Endothelial cell of umbilical vein (primary cell): ENCODE measurements at regions of chr10 and their contacts with region 1.

Region 1: DNA sequence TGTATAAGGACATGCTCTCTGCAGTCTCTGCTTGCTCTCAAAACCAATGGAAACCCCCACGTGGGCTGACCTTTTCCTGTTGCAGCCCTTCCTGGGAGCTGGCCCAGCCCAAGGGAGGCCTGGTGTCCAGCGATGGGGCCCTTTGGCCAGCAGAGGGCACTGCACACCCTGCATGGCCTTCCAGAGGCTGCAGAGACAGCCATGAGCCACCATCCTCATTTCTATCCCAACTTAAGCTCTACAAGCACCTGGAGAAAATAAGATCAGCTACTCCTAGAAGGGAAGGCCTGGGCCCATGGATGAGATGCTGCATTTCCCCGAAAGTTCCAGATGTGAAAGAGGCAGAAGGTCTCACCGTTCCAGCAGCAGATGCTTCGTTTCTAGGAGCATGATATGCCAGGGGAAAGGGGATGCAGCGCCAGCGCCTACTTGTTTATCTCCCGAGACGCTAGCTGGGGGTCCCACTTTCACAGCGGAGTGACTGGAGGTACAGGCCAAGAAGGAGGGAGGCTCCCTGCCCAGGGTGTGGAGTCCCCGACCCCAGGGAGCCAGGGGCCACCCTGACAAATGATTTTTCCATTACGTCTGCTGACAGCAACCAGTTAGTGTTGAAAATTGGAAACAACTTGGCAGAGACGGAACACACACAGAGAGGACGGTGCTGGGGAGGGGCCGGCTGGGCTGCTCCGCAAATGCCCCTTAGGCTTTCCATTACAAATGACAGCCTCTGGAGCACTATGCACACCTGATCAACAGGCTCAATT is 106.4 kb downstream of the ZRANB1 start:
- DNase-seq: peak; percentile 84
- H3K4me3 ChIP-seq: no peak overlapping the region
- H3K27ac ChIP-seq: peak overlapping the region; percentile 8
- H3K4me1 ChIP-seq: peaks cover 26% of the 10 kb centered on the region
- H3K27me3 ChIP-seq: no peaks in the 10 kb centered on the region
- CTCF ChIP-seq: peak; percentile 94 to 97
- POLR2A ChIP-seq: no peak

Region 2: GRCh38 chr10:125037145-125037877 is 11.0 kb before region 1 on chr10:
- CTCF ChIA-PET with region 1: interaction called, 28 read pairs
- POLR2A ChIA-PET with region 1: no interaction called
- dilution Hi-C with region 1: no loop called
- intact Hi-C with region 1: loop called (anchors 1 kb)
- DNase-seq: no peak
- H3K4me3 ChIP-seq: no peak overlapping the region
- H3K27ac ChIP-seq: no peak overlapping the region
- H3K4me1 ChIP-seq: peaks cover 12% of the 10 kb centered on the region
- H3K27me3 ChIP-seq: no peaks in the 10 kb centered on the region
- CTCF ChIP-seq: no peak
- POLR2A ChIP-seq: no peak

Region 3: DNA sequence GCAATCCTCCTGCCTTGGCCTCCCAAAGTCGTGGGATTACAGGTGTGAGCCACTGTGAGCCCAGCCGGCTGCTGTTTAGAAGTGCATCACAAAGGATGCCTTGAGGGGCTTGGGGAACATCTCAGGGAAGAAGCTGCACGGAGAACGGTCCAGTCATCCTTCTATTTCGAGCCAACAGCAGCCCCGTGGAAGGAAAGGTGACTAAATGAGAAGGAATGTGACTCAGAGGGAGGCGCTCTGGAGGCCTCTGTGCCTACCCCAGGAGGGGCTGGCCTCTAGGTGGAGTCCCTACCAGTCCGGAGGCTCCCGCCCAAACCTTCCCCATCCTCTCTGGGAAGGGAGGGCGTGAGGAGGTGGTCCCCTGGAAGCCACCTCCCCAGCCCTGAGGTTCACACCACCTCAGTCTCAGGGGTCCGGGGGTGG is 35.9 kb after region 1 on chr10:
- CTCF ChIA-PET with region 1: interaction called, 21 read pairs
- POLR2A ChIA-PET with region 1: no interaction called
- dilution Hi-C with region 1: no loop called
- intact Hi-C with region 1: no loop called
- DNase-seq: peak; percentile 93
- H3K4me3 ChIP-seq: no peak overlapping the region
- H3K27ac ChIP-seq: peak overlapping the region; percentile 91
- H3K4me1 ChIP-seq: peaks cover 51% of the 10 kb centered on the region
- H3K27me3 ChIP-seq: no peaks in the 10 kb centered on the region
- CTCF ChIP-seq: peak; percentile 28 to 52
- POLR2A ChIP-seq: no peak

Region 4: GRCh38 chr10:125144693-125145623 is 96.7 kb after region 1 on chr10:
- CTCF ChIA-PET with region 1: interaction called, 13 read pairs
- POLR2A ChIA-PET with region 1: no interaction called
- dilution Hi-C with region 1: no loop called
- intact Hi-C with region 1: loop called (anchors 1 kb)
- DNase-seq: no peak
- H3K4me3 ChIP-seq: no peak overlapping the region
- H3K27ac ChIP-seq: no peak overlapping the region
- H3K4me1 ChIP-seq: peaks cover 11% of the 10 kb centered on the region
- H3K27me3 ChIP-seq: no peaks in the 10 kb centered on the region
- CTCF ChIP-seq: peak; percentile 25 to 44
- POLR2A ChIP-seq: no peak

Region 5: GRCh38 chr10:125316449-125316848 is 268.2 kb after region 1 on chr10:
- CTCF ChIA-PET with region 1: no interaction called
- POLR2A ChIA-PET with region 1: no interaction called
- dilution Hi-C with region 1: no loop called
- intact Hi-C with region 1: no loop called
- DNase-seq: no peak
- H3K4me3 ChIP-seq: no peak overlapping the region
- H3K27ac ChIP-seq: no peak overlapping the region
- H3K4me1 ChIP-seq: no peaks in the 10 kb centered on the region
- H3K27me3 ChIP-seq: peaks cover 0 to 3% of the 10 kb centered on the region in 2 experiments
- CTCF ChIP-seq: no peak
- POLR2A ChIP-seq: no peak

Region 6: GRCh38 chr10:125343118-125343925 is 295.0 kb after region 1 on chr10:
- CTCF ChIA-PET with region 1: interaction called, 14 read pairs
- POLR2A ChIA-PET with region 1: no interaction called
- dilution Hi-C with region 1: no loop called
- intact Hi-C with region 1: loop called (anchors 1 kb)
- DNase-seq: peak; percentile 51
- H3K4me3 ChIP-seq: no peak overlapping the region
- H3K27ac ChIP-seq: no peak overlapping the region
- H3K4me1 ChIP-seq: no peaks in the 10 kb centered on the region
- H3K27me3 ChIP-seq: peaks cover 4 to 6% of the 10 kb centered on the region in 2 experiments
- CTCF ChIP-seq: peak; percentile 47 to 54
- POLR2A ChIP-seq: no peak